ENCODE measurements at regions of chr2 and their contacts with region 1.

Region 1: GRCh38 chr2:18749912-18750526 is 160.7 kb upstream of the NT5C1B start:
- DNase-seq: peak; percentile 76
- H3K4me3 Mint-ChIP-seq: no peak overlapping the region
- H3K27ac Mint-ChIP-seq: no peak overlapping the region
- H3K4me1 Mint-ChIP-seq: peaks cover 9% of the 10 kb centered on the region
- H3K27me3 Mint-ChIP-seq: no peaks in the 10 kb centered on the region
- CTCF ChIP-seq: peak; percentile 63

Region 2: DNA sequence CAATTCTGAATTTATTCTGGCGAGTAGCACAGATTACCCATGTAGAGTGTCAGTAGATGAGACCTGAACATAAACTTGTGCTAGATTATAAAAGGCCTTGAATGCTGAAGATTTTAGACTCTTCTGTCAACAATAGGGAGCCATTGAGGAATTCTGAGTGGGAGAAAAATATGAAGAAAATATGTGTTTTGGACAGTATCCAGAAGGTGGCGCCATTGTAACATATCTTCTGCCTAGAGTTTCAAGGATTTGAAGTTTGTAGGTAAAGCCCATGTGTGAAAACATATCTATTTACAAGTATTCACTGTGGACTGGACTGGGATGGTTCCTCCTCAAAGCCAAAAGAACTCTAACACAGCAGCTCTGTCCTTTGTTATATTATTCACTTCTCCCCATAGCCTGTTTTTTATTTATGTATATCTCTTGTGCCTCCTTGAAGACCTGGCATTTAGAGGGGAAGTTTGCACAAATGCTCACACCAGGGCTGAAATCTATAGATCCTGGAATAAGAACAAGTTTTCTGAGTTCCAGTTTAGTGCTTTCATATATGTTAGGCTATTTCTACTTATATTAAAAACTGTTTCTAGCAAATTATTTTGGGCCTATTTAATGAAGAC is 314.5 kb before region 1 on chr2:
- CTCF ChIA-PET with region 1: interaction called, 4 read pairs
- POLR2A ChIA-PET with region 1: no interaction called
- intact Hi-C with region 1: loop called (anchors 5 kb)
- DNase-seq: peak; percentile 69
- H3K4me3 Mint-ChIP-seq: no peak overlapping the region
- H3K27ac Mint-ChIP-seq: no peak overlapping the region
- H3K4me1 Mint-ChIP-seq: no peaks in the 10 kb centered on the region
- H3K27me3 Mint-ChIP-seq: no peaks in the 10 kb centered on the region
- CTCF ChIP-seq: peak; percentile 63

Region 3: DNA sequence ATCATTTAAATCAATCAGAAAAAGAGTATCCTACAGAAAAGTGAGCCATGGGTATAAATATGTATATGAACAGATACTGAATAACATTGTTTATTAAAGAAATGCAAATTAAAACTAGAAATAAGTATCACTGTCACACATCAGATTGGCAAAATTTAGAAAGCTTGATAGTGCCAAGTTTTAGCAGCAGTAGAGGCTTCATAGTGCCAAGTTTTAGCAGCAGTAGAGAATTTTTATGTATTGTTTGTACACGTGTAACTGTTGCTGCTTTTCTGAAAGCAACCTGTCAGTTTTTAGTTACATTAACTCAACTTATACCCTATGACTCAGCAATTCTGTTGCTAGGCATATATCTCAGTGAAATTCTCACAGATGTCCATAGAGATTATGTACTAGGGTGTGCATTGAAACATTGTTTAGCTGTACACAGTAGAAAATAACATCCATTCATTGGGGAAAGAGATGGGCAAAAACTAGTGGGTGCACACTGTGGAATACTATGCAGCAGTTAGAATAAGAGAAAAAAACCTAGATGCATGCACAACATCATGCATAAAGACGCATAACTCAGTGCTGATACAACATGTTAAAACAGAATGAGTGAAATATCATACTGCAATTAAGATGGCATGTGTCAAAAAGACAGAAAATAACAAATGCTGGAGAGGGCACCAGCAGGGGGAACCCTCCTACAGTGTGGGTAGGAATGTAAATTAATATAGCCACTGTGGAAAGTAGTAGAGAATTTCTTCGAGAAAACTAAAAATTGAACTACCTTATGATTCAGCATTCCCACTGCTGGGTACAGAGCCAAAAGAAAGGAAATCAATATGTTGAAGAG is 133.8 kb after region 1 on chr2:
- CTCF ChIA-PET with region 1: no interaction called
- POLR2A ChIA-PET with region 1: no interaction called
- intact Hi-C with region 1: loop called (anchors 5 kb)
- DNase-seq: peak; percentile 46
- H3K4me3 Mint-ChIP-seq: no peak overlapping the region
- H3K27ac Mint-ChIP-seq: no peak overlapping the region
- H3K4me1 Mint-ChIP-seq: peaks cover 7% of the 10 kb centered on the region
- H3K27me3 Mint-ChIP-seq: no peaks in the 10 kb centered on the region
- CTCF ChIP-seq: peak; percentile 55

Region 4: DNA sequence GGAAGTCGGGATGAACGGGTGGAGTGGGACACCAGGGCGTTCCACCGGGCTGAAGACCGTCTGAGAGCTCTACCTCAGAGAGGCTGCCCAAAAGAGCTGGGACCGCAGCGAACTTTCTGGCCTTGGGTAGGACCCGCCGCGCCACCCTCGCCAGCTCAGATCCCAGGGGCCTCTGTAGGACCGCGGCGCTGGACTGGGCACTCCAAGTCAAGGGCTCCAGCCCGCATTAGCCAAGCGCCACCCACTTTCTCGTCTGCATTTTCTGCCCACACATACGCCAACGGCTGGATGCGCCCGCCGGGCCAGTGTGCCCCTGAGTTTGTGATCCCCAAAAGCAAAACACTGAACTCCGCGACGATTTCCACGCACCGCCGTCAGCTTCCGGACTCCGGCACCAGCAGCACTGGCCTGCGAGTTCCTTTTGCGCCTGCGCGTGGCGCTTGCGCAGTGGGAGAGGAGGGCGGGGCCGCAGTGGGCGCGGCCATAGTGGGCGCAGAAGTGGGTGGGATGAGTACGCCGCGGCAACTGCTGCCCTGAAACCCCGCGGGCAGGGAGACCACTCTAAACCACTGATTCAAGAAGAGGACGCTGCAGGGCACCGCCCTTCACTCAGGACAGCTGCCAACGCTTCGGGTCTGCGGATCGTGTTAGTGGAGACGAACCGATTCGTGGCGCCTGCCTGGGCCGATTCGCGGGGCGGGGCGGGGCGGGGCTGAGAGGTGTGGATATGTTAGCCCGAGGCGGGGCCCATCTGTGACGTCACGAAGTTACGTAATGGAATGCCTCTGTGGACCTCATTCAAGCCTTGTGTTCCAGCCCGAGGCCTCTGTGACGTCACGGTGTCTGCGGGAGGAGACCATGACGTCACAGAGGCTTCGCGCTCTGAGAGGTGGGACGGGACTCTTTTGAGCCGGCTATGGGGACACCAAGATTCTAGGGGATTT is 597.9 kb after region 1 on chr2:
- CTCF ChIA-PET with region 1: interaction called, 13 read pairs
- POLR2A ChIA-PET with region 1: no interaction called
- intact Hi-C with region 1: loop called (anchors 5 kb)
- DNase-seq: peak; percentile 96
- H3K4me3 Mint-ChIP-seq: peak overlapping the region; percentile 95
- H3K27ac Mint-ChIP-seq: peak overlapping the region; percentile 99
- H3K4me1 Mint-ChIP-seq: no peaks in the 10 kb centered on the region
- H3K27me3 Mint-ChIP-seq: no peaks in the 10 kb centered on the region
- CTCF ChIP-seq: no peak

Region 5: GRCh38 chr2:19667085-19667484 is 917.1 kb after region 1 on chr2:
- CTCF ChIA-PET with region 1: interaction called, 4 read pairs
- POLR2A ChIA-PET with region 1: no interaction called
- intact Hi-C with region 1: loop called (anchors 1 kb)
- DNase-seq: peak; percentile 59
- H3K4me3 Mint-ChIP-seq: no peak overlapping the region
- H3K27ac Mint-ChIP-seq: no peak overlapping the region
- H3K4me1 Mint-ChIP-seq: no peaks in the 10 kb centered on the region
- H3K27me3 Mint-ChIP-seq: no peaks in the 10 kb centered on the region
- CTCF ChIP-seq: peak; percentile 60

Measured in MCF 10A (cell line).